Psoas muscle (tissue), 8 donors: ENCODE measurements at regions of chr1 and their contacts with region 1.

Region 1: DNA sequence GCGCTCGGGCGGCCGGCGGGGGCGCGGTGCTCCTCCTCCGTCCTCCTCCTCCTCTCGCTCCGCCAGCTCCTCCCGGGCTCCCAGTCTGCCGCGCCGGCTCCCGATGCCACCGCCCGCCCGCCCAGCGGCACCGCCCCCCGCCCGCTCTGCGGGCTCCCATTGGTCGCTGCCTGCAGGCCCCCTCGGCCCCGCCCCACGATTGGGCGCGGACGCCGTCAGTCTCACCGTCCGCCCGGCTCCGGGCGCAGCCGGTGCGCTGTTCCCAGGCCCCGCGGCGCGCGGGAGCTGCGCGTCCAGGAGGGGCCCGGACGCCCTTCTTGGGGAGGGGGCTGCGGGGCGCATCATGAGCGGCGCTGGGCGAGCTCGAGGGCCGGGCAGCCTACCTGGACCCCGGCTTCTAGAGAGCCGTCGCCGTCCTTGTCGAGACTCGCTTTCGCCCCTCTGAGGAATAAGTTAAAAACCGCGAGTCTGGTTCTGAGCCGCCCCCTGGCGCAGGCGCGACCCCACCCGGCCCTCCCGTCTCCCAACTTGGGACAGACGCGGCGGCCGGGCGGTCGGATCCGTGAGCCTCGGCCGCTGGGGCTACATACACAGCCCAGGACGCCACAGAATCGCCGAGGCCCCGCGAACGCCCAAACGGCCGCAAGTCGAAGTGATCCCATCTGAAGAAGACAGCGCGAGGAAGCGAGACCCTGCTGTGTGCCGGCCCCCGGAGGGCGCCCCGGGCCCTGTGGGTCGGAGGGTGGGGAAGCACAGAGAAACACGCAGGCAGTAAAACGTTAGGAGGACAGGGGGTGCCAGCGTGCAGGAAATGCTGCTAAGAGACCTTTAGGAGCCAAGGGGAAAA is at the start of gene SIPA1L2:
- DNase-seq: peak; percentile 96 to 97
- ATAC-seq: peak; percentile 93 to 99 (median 97)
- H3K4me3 ChIP-seq: peak within 1 kb of the TSS; percentile 97
- H3K27ac ChIP-seq: peak within 1 kb of the TSS; percentile 89
- H3K4me1 ChIP-seq: peaks cover 11% of the 10 kb centered on the region
- H3K27me3 ChIP-seq: no peaks in the 10 kb centered on the region
- CTCF ChIP-seq: peak; percentile 47
- total RNA-seq, gene SIPA1L2: 4.3 to 54.4 (median 14.8) TPM

Region 2: DNA sequence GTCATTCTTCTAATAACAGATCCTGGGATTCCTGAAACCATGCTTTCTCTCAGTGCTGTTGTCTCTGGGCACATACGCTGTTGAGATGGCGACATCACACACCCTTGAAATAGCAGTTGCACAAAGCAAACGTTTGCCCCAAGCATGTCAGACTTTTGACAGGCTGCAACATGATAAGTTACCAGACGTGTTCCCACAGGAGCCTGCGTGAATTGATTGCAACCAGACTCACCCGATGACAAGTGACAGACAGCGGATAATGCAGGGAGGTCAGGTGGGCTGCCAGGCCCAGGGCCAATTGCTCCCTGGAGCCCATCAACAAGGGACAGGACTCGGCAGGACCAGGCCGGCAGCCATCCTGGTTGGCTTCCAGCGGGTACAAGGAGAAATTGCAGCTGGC is 311.2 kb before region 1 on chr1:
- intact Hi-C with region 1: loop called in 1 of 2 experiments (anchors 10 kb)
- DNase-seq: peak; percentile 80 to 82
- ATAC-seq: peak; percentile 96 to 98 (median 98)
- H3K4me3 ChIP-seq: no peak overlapping the region
- H3K27ac ChIP-seq: peak overlapping the region; percentile 81
- H3K4me1 ChIP-seq: peaks cover 12% of the 10 kb centered on the region
- H3K27me3 ChIP-seq: no peaks in the 10 kb centered on the region
- CTCF ChIP-seq: no peak

Region 3: DNA sequence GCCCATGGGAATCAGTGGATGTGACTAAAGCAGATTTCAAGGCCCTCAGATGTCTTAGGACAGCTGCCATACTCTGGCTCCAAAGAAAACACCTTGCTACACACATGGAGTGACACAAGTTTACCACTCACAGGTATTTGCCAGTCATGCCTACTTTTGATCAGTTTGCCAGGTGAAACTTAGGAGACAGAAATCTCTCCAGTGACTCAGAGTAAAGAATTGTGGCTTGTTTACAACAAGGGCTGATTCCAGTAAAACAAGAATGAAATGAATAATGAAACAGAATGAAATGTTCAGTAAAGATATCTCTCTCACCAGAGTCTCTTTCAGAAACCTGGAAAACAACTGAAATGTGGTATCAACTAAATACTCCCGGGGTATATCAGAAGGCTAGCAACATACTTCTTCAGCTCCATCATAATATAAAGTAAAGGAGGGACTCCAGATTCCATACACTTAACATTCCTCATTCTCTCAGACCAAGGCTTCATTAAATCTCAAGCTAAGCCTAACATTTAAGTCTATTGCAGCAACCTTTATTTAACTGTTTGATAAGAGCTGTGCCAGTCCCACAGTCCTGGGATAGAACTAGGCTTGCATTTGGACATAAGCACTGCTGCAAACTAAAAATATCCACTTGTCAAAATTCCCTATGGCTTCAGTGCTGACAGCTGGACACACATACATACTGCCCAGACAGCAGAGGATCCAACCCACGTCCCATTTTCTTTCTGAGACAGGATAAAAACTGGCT is 143.6 kb before region 1 on chr1:
- intact Hi-C with region 1: loop called (anchors 10 kb)
- DNase-seq: no peak
- ATAC-seq: peak; percentile 52 to 77 (median 68)
- H3K4me3 ChIP-seq: no peak overlapping the region
- H3K27ac ChIP-seq: peak overlapping the region; percentile 68
- H3K4me1 ChIP-seq: peaks cover 24% of the 10 kb centered on the region
- H3K27me3 ChIP-seq: no peaks in the 10 kb centered on the region
- CTCF ChIP-seq: no peak

Region 4: DNA sequence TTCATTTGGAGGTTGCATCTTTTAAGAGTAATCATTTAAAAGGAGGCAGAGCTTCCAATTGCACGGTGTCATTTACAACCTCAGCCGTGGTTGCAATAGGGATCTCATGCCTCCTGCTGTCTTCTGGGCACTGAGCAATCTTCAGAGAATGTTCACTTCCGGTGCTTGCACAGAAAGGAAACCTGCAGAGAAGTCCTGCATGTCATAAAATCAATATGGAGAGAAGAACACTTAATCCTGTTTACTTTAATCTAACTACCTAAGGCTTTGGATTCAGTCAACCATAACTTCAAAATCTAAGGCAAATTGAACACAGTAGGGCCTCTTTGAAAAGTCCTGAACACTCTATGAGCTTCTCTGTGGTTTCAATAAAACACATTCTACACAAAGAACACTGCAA is 163.7 kb after region 1 on chr1:
- intact Hi-C with region 1: loop called in 1 of 2 experiments (anchors 5 kb)
- DNase-seq: no peak
- ATAC-seq: peak; percentile 78 to 94 (median 92)
- H3K4me3 ChIP-seq: no peak overlapping the region
- H3K27ac ChIP-seq: peak overlapping the region; percentile 68
- H3K4me1 ChIP-seq: peaks cover 26% of the 10 kb centered on the region
- H3K27me3 ChIP-seq: no peaks in the 10 kb centered on the region
- CTCF ChIP-seq: peak; percentile 19

Region 5: DNA sequence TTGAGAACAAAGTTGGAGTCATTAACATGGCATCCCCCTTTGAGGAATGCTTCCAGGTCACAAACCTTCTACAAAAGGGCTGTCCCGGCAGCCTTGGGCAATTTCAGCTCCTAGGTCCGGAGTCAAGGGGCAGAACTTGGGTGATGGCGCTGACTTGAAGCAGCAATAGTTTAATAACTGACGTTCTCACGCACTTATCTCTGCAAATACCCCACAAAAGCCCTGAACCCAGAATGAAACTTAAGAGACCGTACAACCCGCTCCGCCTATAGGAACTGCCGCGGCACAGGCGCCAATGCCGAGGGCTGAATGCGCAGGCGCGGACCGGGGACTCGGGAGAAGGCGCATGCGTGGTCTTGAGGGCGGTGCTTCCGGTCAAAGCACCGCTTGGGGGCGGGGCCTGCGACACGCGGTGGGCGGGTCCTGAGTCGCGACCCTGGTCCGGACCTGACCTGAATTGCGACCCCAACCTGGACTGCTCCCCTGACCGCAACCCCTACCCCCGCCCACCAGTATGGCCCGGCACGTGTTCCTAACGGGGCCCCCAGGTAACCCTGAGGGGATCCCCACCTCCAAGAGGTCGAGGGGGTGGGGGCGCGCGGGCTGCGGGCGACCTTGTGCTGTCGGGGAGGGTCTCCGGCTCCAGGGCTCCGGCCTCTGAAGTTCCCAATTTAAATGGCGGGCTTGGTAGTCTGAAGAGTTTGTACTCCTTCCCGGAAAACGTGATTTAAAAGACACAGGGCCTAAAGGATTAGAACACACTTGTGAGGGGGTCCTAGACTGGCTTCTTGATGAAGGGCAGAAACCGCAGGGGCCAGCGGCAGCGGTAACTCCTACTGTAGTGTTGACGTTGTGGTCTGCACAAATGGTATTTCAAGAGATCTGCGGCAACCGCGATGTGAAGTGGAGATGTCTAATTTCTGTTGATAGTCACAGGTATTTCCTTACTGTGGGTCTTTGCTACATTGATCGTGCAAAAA is 320.2 kb after region 1 on chr1 and contains the start of gene NTPCR:
- intact Hi-C with region 1: loop called (anchors 5 to 10 kb)
- DNase-seq: peak; percentile 94 to 97
- ATAC-seq: peak; percentile 95 to 98 (median 95)
- H3K4me3 ChIP-seq: peak within 1 kb of the TSS; percentile 94
- H3K27ac ChIP-seq: peak within 1 kb of the TSS; percentile 93
- H3K4me1 ChIP-seq: peaks cover 19% of the 10 kb centered on the region
- H3K27me3 ChIP-seq: no peaks in the 10 kb centered on the region
- CTCF ChIP-seq: no peak
- total RNA-seq, gene NTPCR: 37.2 to 72.0 (median 62.2) TPM

Region 6: GRCh38 chr1:233113009-233113879 is 483.0 kb after region 1 on chr1:
- intact Hi-C with region 1: loop called in 1 of 2 experiments (anchors 5 kb)
- DNase-seq: peak; percentile 77 to 84
- ATAC-seq: peak; percentile 98
- H3K4me3 ChIP-seq: peak overlapping the region; percentile 31
- H3K27ac ChIP-seq: peak overlapping the region; percentile 66
- H3K4me1 ChIP-seq: peaks cover 19% of the 10 kb centered on the region
- H3K27me3 ChIP-seq: peaks cover 0 to 2% (median 0%) of the 10 kb centered on the region in 3 donors
- CTCF ChIP-seq: no peak